Heart right ventricle (tissue), 16 donors: ENCODE measurements at regions of chr14 and their contacts with region 1.

Region 1: DNA sequence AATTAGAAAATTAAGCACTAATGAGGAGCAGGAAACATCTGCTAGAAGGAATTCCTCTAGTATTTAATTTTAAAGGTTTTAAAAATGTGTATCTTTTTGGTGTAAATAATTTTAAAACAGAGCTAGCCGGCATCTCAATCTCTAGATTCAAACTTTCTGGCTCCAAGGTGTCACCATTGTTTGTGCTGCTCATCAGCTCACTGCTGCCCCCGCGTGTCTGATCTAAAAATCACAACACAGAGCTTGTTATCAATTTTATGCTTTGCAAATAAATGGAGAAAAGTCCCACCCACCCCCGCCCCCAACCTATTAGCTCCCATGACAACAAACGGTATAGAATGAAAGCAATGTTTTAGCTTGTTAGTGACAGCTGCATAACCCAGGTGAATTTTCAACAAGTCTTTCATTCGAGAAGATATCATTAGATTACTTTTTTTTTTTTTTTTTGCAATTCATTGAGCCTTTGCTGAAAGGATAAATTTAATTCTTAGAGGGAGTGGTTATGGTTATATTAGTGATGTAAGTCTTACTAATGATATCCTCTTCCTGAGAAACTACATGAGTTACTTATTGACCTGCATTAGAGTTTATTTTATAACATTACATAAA is 11.3 kb upstream of the ABHD12B start:
- DNase-seq: peak; percentile 70 to 83
- ATAC-seq: peak; percentile 44 to 89 (median 80)
- H3K4me3 ChIP-seq: peak overlapping the region; percentile 30 to 63 (median 61)
- H3K27ac ChIP-seq: peak overlapping the region in 9 of 10 donors; percentile 24 to 86 (median 64)
- H3K4me1 ChIP-seq: peaks cover 0 to 14% (median 9%) of the 10 kb centered on the region in 9 donors
- H3K27me3 ChIP-seq: no peaks in the 10 kb centered on the region
- CTCF ChIP-seq: peak; percentile 69 to 86 (median 81)

Region 2: DNA sequence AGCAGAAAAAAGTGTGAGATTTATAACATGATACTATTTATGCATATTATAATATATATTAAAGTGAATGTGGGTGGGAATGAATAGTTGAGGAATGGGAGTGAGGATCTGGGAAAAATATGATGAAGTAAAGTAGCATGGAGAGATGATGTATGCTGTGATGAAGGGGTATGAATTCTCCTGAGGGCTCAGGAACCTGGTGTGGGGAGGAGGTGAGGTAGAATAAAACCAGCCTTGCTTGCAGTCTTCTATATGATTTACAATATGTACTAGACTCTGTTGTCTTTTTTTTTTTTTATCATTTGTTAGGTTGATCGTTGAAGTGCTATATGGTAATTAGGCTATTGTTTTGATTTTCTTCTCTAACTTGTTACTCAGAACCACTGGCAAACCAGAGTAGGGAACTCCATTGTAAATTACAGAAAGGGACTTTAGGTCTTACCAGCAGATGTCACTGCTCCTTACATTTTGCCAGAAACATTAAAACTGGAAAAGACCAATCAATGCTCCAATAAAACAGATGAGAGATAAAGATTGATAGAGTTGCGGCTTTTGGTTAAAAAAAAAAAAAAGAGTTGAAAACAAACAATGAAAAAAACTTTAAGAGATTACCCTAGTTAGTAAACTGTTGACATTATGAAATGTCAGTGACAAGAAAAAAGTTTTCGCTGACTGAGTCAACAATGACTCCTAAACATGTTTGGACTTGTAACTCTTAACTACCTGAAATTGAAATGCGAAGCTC is 260.7 kb before region 1 on chr14:
- intact Hi-C with region 1: loop called in 6 of 10 experiments (anchors 5 to 10 kb)
- DNase-seq: no peak
- ATAC-seq: peak in 1 of 8 donors; percentile 31
- H3K4me3 ChIP-seq: no peak overlapping the region
- H3K27ac ChIP-seq: no peak overlapping the region
- H3K4me1 ChIP-seq: no peaks in the 10 kb centered on the region
- H3K27me3 ChIP-seq: no peaks in the 10 kb centered on the region
- CTCF ChIP-seq: peak; percentile 15 to 76 (median 62)

Region 3: DNA sequence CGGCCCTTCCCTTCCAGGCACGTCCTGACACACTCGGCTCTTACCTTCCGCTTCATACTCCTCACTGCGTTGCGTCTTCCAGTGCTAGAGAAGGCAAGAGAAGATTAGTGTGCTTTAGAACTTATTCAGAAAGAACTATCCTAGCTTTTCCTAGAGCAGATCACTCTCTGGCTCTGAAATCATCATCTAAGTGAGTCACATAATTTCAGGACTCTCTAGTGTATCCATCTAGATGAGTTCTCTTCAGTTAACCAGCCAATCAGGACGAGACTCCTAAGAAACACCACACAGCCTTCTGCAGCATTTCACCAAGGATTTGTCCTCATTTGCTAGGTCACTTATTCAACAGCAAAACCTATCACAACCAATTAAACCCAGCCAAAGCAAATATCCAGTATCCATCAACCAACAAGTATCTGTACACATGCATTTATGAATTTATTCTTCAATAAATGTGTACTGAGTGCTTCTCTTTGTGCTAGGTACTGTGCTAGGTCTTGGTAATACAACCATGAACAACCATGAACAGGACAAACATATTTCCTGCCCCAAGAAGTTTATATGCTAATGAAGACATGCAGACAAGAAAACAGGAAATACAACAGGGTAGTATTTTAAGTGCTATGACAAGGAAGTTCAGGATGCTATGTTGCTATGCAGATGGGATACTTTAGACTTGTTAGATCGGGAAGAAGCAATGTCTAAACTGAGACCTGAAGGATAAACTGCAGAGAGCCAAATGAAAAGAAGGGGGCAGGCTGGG is 81.7 kb before region 1 on chr14:
- intact Hi-C with region 1: loop called in 5 of 10 experiments (anchors 2 to 10 kb)
- DNase-seq: no peak
- ATAC-seq: no peak
- H3K4me3 ChIP-seq: no peak overlapping the region
- H3K27ac ChIP-seq: peak overlapping the region in 1 of 10 donors; percentile 26
- H3K4me1 ChIP-seq: peaks cover 0 to 48% (median 19%) of the 10 kb centered on the region in 9 donors
- H3K27me3 ChIP-seq: no peaks in the 10 kb centered on the region
- CTCF ChIP-seq: no peak

Region 4: GRCh38 chr14:50785457-50786063 is 75.0 kb before region 1 on chr14:
- intact Hi-C with region 1: loop called in 6 of 10 experiments (anchors 5 to 10 kb)
- DNase-seq: no peak
- ATAC-seq: peak in 6 of 8 donors; percentile 36 to 65 (median 54)
- H3K4me3 ChIP-seq: no peak overlapping the region
- H3K27ac ChIP-seq: peak overlapping the region in 6 of 10 donors; percentile 9 to 67 (median 60)
- H3K4me1 ChIP-seq: peaks cover 0 to 59% (median 52%) of the 10 kb centered on the region in 9 donors
- H3K27me3 ChIP-seq: no peaks in the 10 kb centered on the region
- CTCF ChIP-seq: no peak

Region 5: GRCh38 chr14:50792051-50792477 is 68.5 kb before region 1 on chr14:
- intact Hi-C with region 1: loop called in 6 of 10 experiments (anchors 5 to 10 kb)
- DNase-seq: no peak
- ATAC-seq: no peak
- H3K4me3 ChIP-seq: peak overlapping the region; percentile 4 to 48 (median 37)
- H3K27ac ChIP-seq: peak overlapping the region; percentile 51 to 79 (median 72)
- H3K4me1 ChIP-seq: peaks cover 0 to 49% (median 27%) of the 10 kb centered on the region in 9 donors
- H3K27me3 ChIP-seq: no peaks in the 10 kb centered on the region
- CTCF ChIP-seq: no peak

Region 6: GRCh38 chr14:50943943-50944646 is 83.5 kb after region 1 on chr14 and contains the start of gene PYGL:
- intact Hi-C with region 1: no loop called
- DNase-seq: peak; percentile 60 to 80
- ATAC-seq: peak; percentile 92 to 96 (median 94)
- H3K4me3 ChIP-seq: peak within 1 kb of the TSS; percentile 57 to 89 (median 74)
- H3K27ac ChIP-seq: peak within 1 kb of the TSS in 9 of 10 donors; percentile 58 to 97 (median 73)
- H3K4me1 ChIP-seq: peaks cover 0 to 34% (median 12%) of the 10 kb centered on the region in 9 donors
- H3K27me3 ChIP-seq: peaks cover 0 to 6% (median 0%) of the 10 kb centered on the region in 7 donors
- CTCF ChIP-seq: no peak
- total RNA-seq, gene PYGL: 2.9 to 18.6 (median 5.3) TPM